ENCODE measurements at regions of chr17 and their contacts with region 1.

Region 1: DNA sequence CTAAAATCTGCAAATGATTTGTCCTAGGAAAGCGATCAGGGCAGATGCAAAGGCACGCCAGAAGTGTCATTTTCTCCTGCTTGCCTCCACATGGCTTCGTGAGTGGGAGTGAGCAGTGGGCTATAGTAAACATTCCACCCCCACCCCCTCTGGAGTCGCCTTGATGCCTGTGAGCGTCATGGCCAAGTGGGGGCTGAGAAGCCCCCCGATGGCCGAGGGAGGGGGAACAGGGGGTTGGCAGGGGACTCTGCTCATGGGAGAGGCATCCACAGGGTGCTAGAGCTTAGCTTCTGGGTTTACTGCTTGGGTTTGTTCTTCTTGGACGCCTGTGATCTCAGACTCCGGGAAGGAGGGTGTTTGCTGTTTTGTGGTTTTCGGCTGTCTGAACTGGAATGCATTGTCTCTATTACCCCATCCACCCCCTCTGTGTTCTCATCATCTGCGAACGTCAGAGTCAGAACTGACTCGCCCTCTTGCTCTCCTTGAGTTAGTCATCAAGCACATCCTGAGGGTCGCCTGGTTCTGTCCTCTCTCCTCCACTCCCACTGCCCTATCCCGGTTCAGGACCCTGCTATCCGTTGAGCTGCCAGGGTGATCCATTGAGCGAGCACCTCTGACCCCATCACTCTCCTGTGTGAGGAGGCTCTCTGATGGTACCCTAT is 15.4 kb downstream of the TNS4 start:
- DNase-seq: peak in 1 of 2 donors; percentile 98
- H3K4me3 ChIP-seq: peak overlapping the region in 1 of 2 donors; percentile 19
- H3K27ac ChIP-seq: peak overlapping the region; percentile 72
- H3K4me1 ChIP-seq: peaks cover 87% of the 10 kb centered on the region
- H3K27me3 ChIP-seq: no peaks in the 10 kb centered on the region
- CTCF ChIP-seq: peak in 1 of 3 experiments; percentile 7
- POLR2A ChIP-seq: no peak

Region 2: GRCh38 chr17:40536295-40537171 is 50.6 kb after region 1 on chr17:
- intact Hi-C with region 1: loop called (anchors 5 kb)
- DNase-seq: no peak
- H3K4me3 ChIP-seq: no peak overlapping the region
- H3K27ac ChIP-seq: peak overlapping the region; percentile 91
- H3K4me1 ChIP-seq: peaks cover 77% of the 10 kb centered on the region
- H3K27me3 ChIP-seq: no peaks in the 10 kb centered on the region
- CTCF ChIP-seq: no peak
- POLR2A ChIP-seq: no peak